Aorta (tissue), 5 donors: ENCODE measurements at regions of chr5 and their contacts with region 1.

Region 1: GRCh38 chr5:150700594-150701293 is at the start of gene RBM22:
- DNase-seq: peak; percentile 96 to 97
- ATAC-seq: peak; percentile 99
- H3K4me3 ChIP-seq: peak within 1 kb of the TSS; percentile 68 to 94
- H3K27ac ChIP-seq: peak within 1 kb of the TSS; percentile 57 to 93
- H3K4me1 ChIP-seq: peaks cover 0 to 3% of the 10 kb centered on the region in 2 donors
- H3K27me3 ChIP-seq: no peaks in the 10 kb centered on the region
- total RNA-seq, gene RBM22: 40.1 to 46.9 TPM

Region 2: DNA sequence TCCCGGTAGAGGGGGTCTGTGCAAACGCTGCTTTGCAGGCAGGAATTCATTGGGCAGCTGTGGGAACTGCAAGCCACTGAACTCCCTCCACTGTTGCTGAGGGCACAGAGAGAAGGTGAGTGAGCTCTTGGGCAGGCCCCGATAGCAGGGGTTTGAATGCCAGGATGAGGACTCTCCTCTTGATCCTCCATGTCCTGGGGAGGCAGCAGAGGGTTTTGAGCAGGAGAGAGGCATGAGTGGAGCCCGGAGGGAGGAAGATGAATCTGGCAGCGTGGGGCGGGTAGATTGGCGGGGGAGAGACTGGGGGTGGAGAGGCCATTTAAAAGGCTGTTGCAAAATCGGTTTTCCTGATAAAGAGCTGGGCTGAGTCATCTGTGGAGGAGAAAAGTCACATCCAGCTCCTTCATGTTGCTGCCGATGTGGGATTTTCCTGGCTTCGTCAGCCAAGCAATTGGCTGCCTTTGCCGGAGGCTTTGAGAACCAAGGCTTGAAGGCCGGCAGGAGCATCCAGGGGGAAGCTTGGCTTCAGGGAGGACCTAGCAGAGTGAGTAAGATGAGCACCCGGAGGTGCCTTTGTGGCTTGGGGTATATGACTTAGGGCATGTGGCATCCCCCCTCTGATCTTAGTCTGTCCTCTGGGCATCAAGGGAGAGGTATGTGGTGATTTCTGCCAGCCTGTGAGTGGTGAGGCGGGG is 60.3 kb before region 1 on chr5 and contains the start of gene SYNPO:
- intact Hi-C with region 1: no loop called
- DNase-seq: peak; percentile 85 to 91
- ATAC-seq: peak; percentile 81
- H3K4me3 ChIP-seq: no peak within 1 kb of the TSS
- H3K27ac ChIP-seq: peak within 1 kb of the TSS; percentile 89 to 93
- H3K4me1 ChIP-seq: peaks cover 2 to 6% of the 10 kb centered on the region in 2 donors
- H3K27me3 ChIP-seq: no peaks in the 10 kb centered on the region
- total RNA-seq, gene SYNPO: 327 to 478 TPM

Region 3: DNA sequence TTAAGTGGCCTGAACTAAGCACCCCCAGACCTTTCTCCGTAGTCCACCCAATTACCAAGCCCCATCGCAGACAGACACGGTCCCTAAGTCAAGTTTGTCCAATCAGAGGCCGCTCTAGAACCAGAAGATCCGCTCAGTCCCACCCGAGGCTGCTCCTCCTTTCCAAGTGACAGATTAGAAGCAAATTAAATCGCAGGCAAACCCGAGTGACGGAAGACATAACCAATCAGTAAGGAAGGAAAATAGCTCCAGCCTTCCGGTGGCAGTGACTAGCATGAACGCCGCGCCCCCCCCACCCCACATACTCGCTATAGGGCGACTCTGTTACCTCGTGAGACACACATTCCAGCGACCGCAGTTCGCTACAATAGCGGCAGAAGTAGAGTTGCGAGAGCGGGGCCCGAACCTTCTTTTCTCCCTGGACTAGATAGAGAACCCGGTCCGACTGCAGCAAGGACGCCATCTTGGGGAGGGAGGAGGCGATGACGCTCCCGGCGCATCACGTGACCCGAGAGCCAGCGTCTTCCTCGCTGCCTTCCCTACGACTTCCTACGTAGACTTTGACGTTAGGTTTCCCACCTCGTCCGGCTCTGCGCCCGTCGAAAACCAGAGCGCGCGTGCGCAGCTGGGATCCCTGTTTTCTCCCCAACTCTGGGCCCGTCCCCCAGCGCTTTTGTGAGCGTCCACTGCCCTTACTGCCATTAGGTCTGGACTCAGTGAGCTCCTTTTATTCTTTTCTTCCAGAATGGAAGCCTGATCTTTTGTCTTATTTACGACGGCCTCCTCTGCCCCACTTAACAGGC is 58.0 kb after region 1 on chr5 and contains the start of gene DCTN4:
- intact Hi-C with region 1: loop called in 1 of 2 experiments (anchors 1 kb)
- DNase-seq: peak; percentile 98 to 99
- ATAC-seq: peak; percentile 96
- H3K4me3 ChIP-seq: peak within 1 kb of the TSS; percentile 69 to 84
- H3K27ac ChIP-seq: peak within 1 kb of the TSS; percentile 76 to 94
- H3K4me1 ChIP-seq: peaks cover 0 to 3% of the 10 kb centered on the region in 2 donors
- H3K27me3 ChIP-seq: no peaks in the 10 kb centered on the region
- total RNA-seq, gene DCTN4: 58.9 to 66.4 TPM

Region 4: DNA sequence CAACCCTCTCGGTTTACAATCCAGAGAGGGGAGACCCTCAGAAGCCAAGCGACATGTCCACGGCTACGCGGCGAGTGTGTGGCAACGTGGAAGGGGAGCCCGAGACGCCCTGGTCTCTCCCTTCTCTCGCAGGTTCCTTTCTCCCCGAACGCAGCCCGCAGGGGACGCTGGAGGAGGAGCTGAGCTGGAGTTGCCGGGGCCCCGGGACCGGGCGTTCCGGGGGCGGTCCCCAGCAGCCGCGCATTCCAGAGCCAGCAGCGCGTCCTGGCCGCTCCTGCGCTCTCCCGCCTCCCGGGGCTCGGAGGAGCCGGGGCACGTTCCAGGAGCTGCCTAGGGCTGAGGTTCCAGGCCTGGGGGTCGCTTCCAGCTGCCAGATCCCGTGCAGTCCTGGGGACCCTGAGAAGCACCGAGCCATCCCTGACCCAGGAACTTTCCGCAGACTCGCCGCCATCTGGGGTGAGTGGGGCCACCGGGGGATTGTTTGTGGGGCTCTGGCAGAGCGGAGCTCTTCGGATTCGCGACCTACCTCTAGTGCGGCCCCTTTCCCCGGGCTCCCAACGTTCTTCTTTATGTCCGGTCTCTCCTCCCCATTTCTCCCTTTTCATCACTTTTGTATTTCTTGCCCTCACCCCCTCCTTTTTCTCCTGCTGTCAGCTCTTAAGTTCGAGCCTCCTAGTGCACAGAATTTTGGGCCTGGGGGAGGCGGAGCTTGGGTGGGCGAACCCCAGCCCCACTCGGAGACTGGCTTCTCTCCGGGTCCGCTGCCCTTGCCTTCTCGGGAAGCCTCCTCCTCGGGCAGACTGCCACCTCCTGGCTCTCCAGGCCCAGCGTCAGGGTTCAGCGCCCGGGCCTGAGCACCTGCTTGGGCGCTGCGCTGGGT is 78.0 kb after region 1 on chr5 and contains the start of gene SMIM3:
- intact Hi-C with region 1: loop called in 1 of 2 experiments (anchors 5 kb)
- DNase-seq: peak; percentile 91 to 95
- ATAC-seq: peak; percentile 89
- H3K4me3 ChIP-seq: peak within 1 kb of the TSS; percentile 46 to 96
- H3K27ac ChIP-seq: peak within 1 kb of the TSS; percentile 80 to 90
- H3K4me1 ChIP-seq: peaks cover 6 to 10% of the 10 kb centered on the region in 2 donors
- H3K27me3 ChIP-seq: no peaks in the 10 kb centered on the region
- total RNA-seq, gene SMIM3: 45.3 to 47.6 TPM